ENCODE measurements at regions of chr21 and their contacts with region 1.

Region 1: DNA sequence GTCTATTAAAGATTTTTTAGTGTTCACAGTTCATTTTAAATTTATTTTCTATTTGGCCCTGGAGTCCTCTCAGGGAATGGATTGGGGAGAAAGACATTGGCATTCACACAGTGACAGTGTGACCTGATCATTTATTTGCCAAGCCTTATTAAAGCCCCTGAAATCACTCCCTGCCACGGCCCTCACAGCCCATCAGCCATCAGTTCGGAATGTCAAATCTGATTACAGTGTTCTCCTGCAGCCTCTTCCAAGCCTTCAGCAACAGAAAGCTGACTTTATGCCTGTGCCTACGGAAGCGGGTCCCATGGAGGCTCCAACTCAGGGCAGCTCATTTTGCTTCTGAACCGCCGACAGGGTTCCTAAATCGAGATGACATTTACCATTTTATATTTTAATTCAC is 451.2 kb downstream of the DSCAM start:
- DNase-seq: no peak
- H3K4me3 ChIP-seq: no peak overlapping the region
- H3K27ac ChIP-seq: no peak overlapping the region
- H3K4me1 ChIP-seq: no peaks in the 10 kb centered on the region
- H3K27me3 ChIP-seq: no peaks in the 10 kb centered on the region
- CTCF ChIP-seq: no peak
- EP300 ChIP-seq: no peak
- POLR2A ChIP-seq: no peak

Region 2: GRCh38 chr21:40215941-40216340 is 179.8 kb before region 1 on chr21:
- intact Hi-C with region 1: loop called in 1 of 4 experiments (anchors 5 kb)
- DNase-seq: no peak
- H3K4me3 ChIP-seq: no peak overlapping the region
- H3K27ac ChIP-seq: no peak overlapping the region
- H3K4me1 ChIP-seq: no peaks in the 10 kb centered on the region
- H3K27me3 ChIP-seq: no peaks in the 10 kb centered on the region
- CTCF ChIP-seq: no peak
- EP300 ChIP-seq: no peak
- POLR2A ChIP-seq: no peak

Region 3: GRCh38 chr21:40454057-40454456 is 58.3 kb after region 1 on chr21:
- intact Hi-C with region 1: no loop called
- DNase-seq: no peak
- H3K4me3 ChIP-seq: no peak overlapping the region
- H3K27ac ChIP-seq: no peak overlapping the region
- H3K4me1 ChIP-seq: no peaks in the 10 kb centered on the region
- H3K27me3 ChIP-seq: no peaks in the 10 kb centered on the region
- CTCF ChIP-seq: no peak
- EP300 ChIP-seq: no peak
- POLR2A ChIP-seq: no peak

Region 4: DNA sequence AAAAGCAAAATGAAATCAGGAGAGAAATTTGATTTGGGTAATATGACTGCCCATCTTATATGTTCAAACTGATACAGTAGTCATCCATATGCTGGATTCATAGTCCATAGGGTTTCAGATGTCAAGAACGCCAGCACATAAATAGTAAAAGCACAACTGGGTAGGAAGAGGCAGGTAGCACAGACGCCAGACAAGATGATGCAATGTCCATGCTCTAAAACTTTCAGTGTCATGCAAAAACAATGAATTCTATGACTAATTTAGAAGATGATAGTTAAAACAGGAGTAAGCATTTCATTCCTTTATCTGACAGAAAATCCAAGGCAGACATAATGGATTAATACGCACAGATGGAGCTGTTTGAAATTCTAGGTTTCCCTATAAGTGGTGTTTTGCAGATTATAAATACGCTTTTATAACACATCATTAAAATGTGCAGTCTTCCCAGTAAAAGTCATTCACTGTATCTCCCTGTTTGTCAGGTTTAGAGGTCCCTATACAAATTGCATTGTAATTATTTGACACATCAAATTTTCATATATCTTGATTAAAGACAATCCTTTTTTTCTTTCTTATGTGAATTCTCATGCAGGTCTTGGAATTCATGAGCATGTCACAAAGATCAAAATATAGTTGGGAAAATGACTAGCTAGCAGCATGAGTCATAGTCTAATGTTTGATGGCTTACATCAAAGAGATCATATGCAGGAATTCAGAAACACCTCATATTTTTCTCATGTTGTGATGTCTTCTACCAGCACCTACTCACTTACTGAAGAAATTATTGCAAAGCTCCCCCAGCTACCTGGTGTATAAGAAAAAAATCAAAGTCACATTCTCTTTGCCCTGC is 311.3 kb after region 1 on chr21:
- intact Hi-C with region 1: no loop called
- DNase-seq: no peak
- H3K4me3 ChIP-seq: no peak overlapping the region
- H3K27ac ChIP-seq: no peak overlapping the region
- H3K4me1 ChIP-seq: no peaks in the 10 kb centered on the region
- H3K27me3 ChIP-seq: no peaks in the 10 kb centered on the region
- CTCF ChIP-seq: no peak
- EP300 ChIP-seq: no peak
- POLR2A ChIP-seq: no peak

Measured in ovary (tissue), 10 donors.